ENCODE measurements at regions of chr9 and their contacts with region 1.

Region 1: DNA sequence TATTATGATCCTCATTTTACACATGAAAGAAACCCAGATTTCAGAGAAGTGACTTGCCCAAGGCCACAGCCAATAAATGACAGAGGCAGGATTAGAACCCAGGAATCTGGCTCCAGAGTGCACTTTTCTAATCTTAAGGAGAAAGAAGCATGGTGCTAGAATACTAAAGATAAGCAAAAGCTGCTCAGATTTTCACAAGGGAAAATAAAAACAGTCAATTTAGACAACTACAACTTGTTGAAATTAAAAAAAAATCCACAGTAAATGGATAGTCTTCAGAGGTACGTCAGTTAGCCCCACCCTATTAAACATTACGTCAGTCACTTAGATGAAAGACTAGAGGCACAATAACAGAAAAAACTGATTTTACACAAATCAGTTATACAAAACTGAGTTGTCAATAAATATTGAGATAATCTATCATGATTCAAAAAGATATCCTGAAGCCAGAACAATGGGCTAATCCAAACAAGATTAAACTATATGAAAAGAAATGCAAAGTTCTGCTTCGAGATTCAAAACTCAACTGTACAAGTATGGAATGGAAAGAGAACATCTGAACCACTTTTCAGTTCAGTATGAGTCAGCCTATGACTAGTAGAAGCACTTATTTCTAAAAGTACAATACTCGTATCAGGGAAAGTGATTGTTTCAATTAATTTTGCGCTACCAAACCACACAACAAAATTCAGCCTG is 9.3 kb downstream of the TMEM245 start:
- DNase-seq: no peak
- H3K4me3 Mint-ChIP-seq: peak overlapping the region; percentile 20
- H3K27ac Mint-ChIP-seq: peak overlapping the region; percentile 15
- H3K4me1 Mint-ChIP-seq: peaks cover 81% of the 10 kb centered on the region
- H3K27me3 Mint-ChIP-seq: no peaks in the 10 kb centered on the region

Region 2: GRCh38 chr9:109046346-109046745 is 64.1 kb before region 1 on chr9:
- CTCF ChIA-PET with region 1: no interaction called
- POLR2A ChIA-PET with region 1: no interaction called
- intact Hi-C with region 1: loop called (anchors 2 kb)
- DNase-seq: no peak
- H3K4me3 Mint-ChIP-seq: no peak overlapping the region
- H3K27ac Mint-ChIP-seq: no peak overlapping the region
- H3K4me1 Mint-ChIP-seq: peaks cover 13% of the 10 kb centered on the region
- H3K27me3 Mint-ChIP-seq: no peaks in the 10 kb centered on the region

Region 3: DNA sequence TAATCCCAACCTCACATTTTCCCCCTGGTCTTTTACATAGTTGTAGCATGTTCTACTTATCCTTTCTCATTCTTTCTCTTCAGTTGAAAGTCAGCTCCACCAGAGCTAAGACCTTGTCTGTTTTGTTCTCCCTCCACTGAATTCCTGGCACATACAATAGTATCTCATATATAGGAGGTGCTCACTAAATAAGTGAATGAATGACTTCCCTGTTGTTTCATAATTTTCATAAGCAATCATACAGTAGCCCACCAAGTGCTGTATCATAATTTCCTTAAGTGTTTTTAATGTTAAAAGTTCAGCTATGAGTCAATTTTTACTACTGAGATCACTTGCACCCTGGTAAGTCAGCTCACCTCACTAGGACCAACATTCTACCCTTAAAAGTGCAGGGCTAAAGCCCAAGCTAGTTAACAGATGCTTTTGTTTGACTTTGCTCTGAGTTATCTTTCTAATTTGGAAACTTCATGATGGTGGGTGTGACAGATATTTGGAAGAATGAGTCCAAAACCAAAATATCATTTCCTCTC is 18.4 kb before region 1 on chr9:
- CTCF ChIA-PET with region 1: interaction called, 3 read pairs
- POLR2A ChIA-PET with region 1: interaction called, 5 read pairs
- intact Hi-C with region 1: loop called (anchors 1 kb)
- DNase-seq: no peak
- H3K4me3 Mint-ChIP-seq: no peak overlapping the region
- H3K27ac Mint-ChIP-seq: peak overlapping the region; percentile 21
- H3K4me1 Mint-ChIP-seq: peaks cover 52% of the 10 kb centered on the region
- H3K27me3 Mint-ChIP-seq: no peaks in the 10 kb centered on the region

Region 4: DNA sequence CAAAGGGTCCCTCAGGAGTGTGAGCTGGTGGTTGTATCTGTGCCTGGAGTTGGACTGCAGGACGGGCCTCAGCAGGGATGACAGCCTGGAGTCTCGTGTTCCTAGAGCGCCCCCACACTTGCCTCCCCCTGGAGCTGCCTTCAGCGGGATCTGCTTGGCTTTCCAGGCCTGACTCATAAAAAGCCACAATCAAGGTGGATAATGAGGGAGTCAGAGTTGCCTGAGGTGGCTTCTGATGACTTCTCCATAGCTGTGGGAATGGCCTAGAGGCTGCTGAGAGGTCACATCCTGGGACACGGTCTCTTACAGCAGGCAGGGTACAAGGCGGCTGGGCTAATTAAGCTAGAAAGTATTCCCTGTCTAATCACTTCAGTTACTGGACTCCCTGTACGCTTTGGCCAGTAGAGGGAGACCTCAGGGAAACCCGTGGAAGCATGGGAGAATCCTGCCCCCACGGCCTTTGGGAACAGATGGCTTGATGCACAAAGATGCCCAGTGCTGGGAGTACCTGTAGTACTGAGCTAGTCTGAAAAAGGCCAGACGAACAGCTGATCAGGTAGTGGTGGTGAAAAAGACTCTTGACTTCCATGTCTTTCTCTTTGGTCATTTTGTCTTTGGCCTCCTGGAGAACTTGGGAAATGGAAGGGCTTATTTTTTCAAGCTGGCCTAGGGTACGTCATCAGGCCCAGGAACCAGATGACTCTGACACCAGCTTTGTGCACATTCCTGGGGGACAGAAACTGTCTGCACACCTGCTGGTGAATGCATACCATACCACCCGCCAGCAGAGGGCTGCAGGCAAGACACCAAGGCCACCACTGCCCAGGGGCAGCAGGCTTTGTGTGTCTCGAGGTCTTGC is 72.7 kb after region 1 on chr9:
- CTCF ChIA-PET with region 1: no interaction called
- POLR2A ChIA-PET with region 1: no interaction called
- intact Hi-C with region 1: loop called (anchors 2 kb)
- DNase-seq: peak; percentile 24
- H3K4me3 Mint-ChIP-seq: no peak overlapping the region
- H3K27ac Mint-ChIP-seq: no peak overlapping the region
- H3K4me1 Mint-ChIP-seq: peaks cover 11% of the 10 kb centered on the region
- H3K27me3 Mint-ChIP-seq: peaks cover 7% of the 10 kb centered on the region

Region 5: GRCh38 chr9:109198736-109199379 is 88.4 kb after region 1 on chr9:
- CTCF ChIA-PET with region 1: no interaction called
- POLR2A ChIA-PET with region 1: no interaction called
- intact Hi-C with region 1: no loop called
- DNase-seq: peak; percentile 11
- H3K4me3 Mint-ChIP-seq: no peak overlapping the region
- H3K27ac Mint-ChIP-seq: no peak overlapping the region
- H3K4me1 Mint-ChIP-seq: no peaks in the 10 kb centered on the region
- H3K27me3 Mint-ChIP-seq: peaks cover 2% of the 10 kb centered on the region

Measured in activated CD4-positive, alpha-beta memory T cell treated with anti-CD3 and anti-CD28 coated beads for 36 hours (primary cell).